A549 (cell line): ENCODE measurements at regions of chr17 and their contacts with region 1.

Region 1: DNA sequence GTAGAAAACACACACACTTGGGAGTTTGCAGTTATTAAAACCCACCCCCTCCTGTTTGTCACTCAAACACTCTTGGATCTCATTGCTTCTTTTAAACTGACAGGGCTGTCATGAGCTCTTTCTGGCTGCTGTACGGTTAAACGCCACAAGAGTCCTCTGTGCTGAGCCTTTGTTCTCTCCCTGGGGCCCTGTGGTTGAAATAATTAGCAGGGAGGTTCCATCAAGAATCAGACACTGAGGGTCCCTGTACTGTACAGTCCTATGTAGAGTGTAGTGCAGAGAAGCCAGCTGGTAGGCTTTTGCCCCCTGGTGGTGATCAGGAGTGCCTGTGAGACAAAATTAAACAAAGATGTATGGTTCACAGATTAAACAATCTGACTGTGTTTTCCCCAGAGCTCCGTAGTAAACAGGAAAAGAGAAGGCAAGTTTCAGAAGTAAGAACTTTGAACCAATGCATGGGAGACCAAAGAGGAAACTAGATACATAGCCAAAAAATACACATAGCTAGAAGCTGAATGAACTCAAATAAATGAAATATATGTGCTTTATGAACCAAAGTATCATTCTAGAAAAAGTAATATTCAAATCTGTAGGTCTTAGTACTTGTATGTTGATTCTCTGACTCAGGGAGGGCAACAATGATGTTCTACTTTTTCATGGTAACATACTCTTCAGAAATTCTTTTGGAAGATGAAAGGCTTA is 1.4 kb upstream of the SSH2 start:
- DNase-seq: peak; percentile 67 to 85
- ATAC-seq: peak; percentile 60 to 75
- H3K4me3 ChIP-seq: peak overlapping the region; percentile 78
- H3K27ac ChIP-seq: peak overlapping the region; percentile 91 to 95; a peak in 4 of 6 replicates
- H3K4me1 ChIP-seq: peaks cover 31% of the 10 kb centered on the region
- CTCF ChIP-seq: peak; percentile 99
- EP300 ChIP-seq: no peak
- POLR2A ChIP-seq: no peak
- RAD21 ChIP-seq: peak; percentile 91 to 93

Region 2: GRCh38 chr17:29579866-29580771 is 351.3 kb before region 1 on chr17:
- CTCF ChIA-PET with region 1: interaction called, 13 read pairs
- POLR2A ChIA-PET with region 1: no interaction called
- DNase-seq: peak; percentile 91 to 99
- ATAC-seq: peak; percentile 87 to 96
- H3K4me3 ChIP-seq: no peak overlapping the region
- H3K27ac ChIP-seq: peak overlapping the region; percentile 41 to 72; a peak in 5 of 6 replicates
- H3K4me1 ChIP-seq: peaks cover 26% of the 10 kb centered on the region
- CTCF ChIP-seq: peak; percentile 98
- EP300 ChIP-seq: no peak
- POLR2A ChIP-seq: no peak
- RAD21 ChIP-seq: peak; percentile 95

Region 3: GRCh38 chr17:29789196-29790170 is 141.9 kb before region 1 on chr17:
- CTCF ChIA-PET with region 1: interaction called, 16 read pairs
- POLR2A ChIA-PET with region 1: no interaction called
- DNase-seq: no peak
- ATAC-seq: peak in 1 of 2 experiments; percentile 37; a peak in 1 of 6 replicates
- H3K4me3 ChIP-seq: no peak overlapping the region
- H3K27ac ChIP-seq: no peak overlapping the region
- H3K4me1 ChIP-seq: peaks cover 24% of the 10 kb centered on the region
- CTCF ChIP-seq: no peak
- EP300 ChIP-seq: no peak
- POLR2A ChIP-seq: no peak
- RAD21 ChIP-seq: no peak

Region 4: GRCh38 chr17:29844339-29845048 is 86.9 kb before region 1 on chr17:
- CTCF ChIA-PET with region 1: interaction called, 26 read pairs
- POLR2A ChIA-PET with region 1: interaction called, 6 read pairs
- DNase-seq: no peak
- ATAC-seq: peak in 1 of 2 experiments; percentile 36; a peak in 1 of 6 replicates
- H3K4me3 ChIP-seq: no peak overlapping the region
- H3K27ac ChIP-seq: no peak overlapping the region
- H3K4me1 ChIP-seq: peaks cover 16% of the 10 kb centered on the region
- CTCF ChIP-seq: no peak
- EP300 ChIP-seq: no peak
- POLR2A ChIP-seq: no peak
- RAD21 ChIP-seq: no peak

Region 5: DNA sequence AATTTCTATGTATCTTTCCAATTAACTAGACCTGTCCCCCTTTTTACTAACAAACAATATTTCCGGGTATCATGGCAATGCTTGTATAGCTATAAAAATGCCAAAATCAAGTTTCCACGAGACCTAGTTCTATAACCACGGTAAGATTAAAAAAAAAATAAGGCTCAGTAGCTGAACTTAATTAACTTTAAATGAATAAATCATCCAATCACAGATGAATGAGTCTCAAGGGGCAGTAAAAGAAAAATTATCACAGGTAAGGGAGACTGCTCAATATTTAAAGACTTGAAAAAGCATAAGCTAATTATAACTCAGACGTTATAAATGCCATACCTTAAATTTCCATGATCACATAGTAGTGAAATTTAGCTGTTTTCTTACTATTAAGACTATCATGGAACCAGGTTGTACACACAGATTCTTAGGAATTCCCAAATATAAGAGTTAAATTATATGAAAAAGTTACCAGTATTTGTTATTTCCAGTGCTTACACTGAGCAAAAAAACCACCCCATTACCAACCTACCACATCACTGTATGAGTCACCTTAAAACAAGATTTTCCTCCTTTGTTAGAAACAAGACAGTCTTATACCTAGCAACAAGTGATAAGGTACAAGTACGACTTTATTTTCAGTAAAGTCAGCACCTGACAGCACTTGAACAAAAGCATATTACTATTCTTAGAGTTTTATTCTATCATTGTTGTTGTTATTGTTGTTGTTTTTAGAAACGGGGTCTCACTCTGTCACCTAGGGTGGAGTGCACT is 22.0 kb before region 1 on chr17:
- CTCF ChIA-PET with region 1: interaction called, 30 read pairs
- POLR2A ChIA-PET with region 1: no interaction called
- DNase-seq: no peak
- ATAC-seq: 0 out of 6 replicates have a peak, but pooled peaks of 1 of the 2 experiments have one; percentile 43
- H3K4me3 ChIP-seq: no peak overlapping the region
- H3K27ac ChIP-seq: no peak overlapping the region
- H3K4me1 ChIP-seq: no peaks in the 10 kb centered on the region
- CTCF ChIP-seq: no peak
- EP300 ChIP-seq: no peak
- POLR2A ChIP-seq: no peak
- RAD21 ChIP-seq: no peak

Region 6: GRCh38 chr17:29977836-29978235 is 46.5 kb after region 1 on chr17:
- CTCF ChIA-PET with region 1: interaction called, 11 read pairs
- POLR2A ChIA-PET with region 1: no interaction called
- DNase-seq: peak in 1 of 2 experiments; percentile 51
- ATAC-seq: peak; percentile 63 to 81; a peak in 5 of 6 replicates
- H3K4me3 ChIP-seq: no peak overlapping the region
- H3K27ac ChIP-seq: no peak overlapping the region
- H3K4me1 ChIP-seq: no peaks in the 10 kb centered on the region
- CTCF ChIP-seq: no peak
- EP300 ChIP-seq: no peak
- POLR2A ChIP-seq: no peak
- RAD21 ChIP-seq: no peak

Region 7: DNA sequence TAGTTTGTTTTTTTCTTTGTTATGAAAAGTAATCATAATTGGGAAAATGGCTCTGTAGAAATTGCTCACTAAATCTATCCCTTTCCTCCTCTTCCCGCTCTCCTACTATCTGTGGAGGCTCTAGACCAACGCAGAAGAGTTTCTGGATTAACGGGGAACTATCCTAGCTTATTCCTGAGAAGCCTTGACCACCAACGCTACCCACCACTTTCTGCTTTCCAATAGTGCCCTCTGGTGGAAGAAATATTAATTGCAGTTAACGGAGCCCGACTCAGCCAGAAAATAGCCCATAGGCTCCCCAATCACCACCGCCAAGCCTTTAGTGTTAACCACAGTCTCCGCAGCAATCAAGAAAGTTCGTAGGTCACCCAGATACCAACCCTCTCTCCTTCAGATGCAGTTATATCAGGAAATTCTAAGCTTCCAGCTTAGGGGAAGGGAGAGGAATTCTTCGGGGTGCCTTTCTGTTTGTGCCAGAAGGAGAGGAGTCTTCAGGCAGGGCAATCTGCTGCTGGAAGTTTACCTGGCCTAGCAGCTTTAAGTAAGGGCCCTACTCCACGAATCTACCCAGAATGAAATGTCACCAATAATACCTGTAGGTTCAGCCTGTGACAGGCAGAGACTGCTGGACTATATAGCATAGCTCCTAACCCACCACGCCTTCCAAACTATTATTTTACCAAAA is 162.2 kb after region 1 on chr17:
- CTCF ChIA-PET with region 1: interaction called, 173 read pairs
- POLR2A ChIA-PET with region 1: no interaction called
- DNase-seq: peak; percentile 63 to 94
- ATAC-seq: peak; percentile 79 to 92
- H3K4me3 ChIP-seq: no peak overlapping the region
- H3K27ac ChIP-seq: no peak overlapping the region
- H3K4me1 ChIP-seq: peaks cover 6% of the 10 kb centered on the region; the same call in 1 of the 3 replicates
- CTCF ChIP-seq: peak; percentile 97
- EP300 ChIP-seq: no peak
- POLR2A ChIP-seq: no peak
- RAD21 ChIP-seq: peak; percentile 95 to 96